CD4-positive, alpha-beta T cell (primary cell): ENCODE measurements at regions of chr10 and their contacts with region 1.

Region 1: GRCh38 chr10:6563075-6563474 is 17.0 kb downstream of the PRKCQ start:
- DNase-seq: peak in 6 of 14 experiments; percentile 13 to 64 (median 50)
- ATAC-seq: peak; percentile 58
- H3K4me3 ChIP-seq: peak overlapping the region; percentile 21
- H3K4me3 Mint-ChIP-seq: peak overlapping the region; percentile 82
- H3K27ac ChIP-seq: peak overlapping the region; percentile 50 to 66
- H3K27ac Mint-ChIP-seq: peak overlapping the region; percentile 81
- H3K4me1 ChIP-seq: peaks cover 71% of the 10 kb centered on the region
- H3K4me1 Mint-ChIP-seq: peaks cover 90% of the 10 kb centered on the region
- H3K27me3 ChIP-seq: no peaks in the 10 kb centered on the region
- H3K27me3 Mint-ChIP-seq: no peaks in the 10 kb centered on the region
- CTCF ChIP-seq: no peak

Region 2: DNA sequence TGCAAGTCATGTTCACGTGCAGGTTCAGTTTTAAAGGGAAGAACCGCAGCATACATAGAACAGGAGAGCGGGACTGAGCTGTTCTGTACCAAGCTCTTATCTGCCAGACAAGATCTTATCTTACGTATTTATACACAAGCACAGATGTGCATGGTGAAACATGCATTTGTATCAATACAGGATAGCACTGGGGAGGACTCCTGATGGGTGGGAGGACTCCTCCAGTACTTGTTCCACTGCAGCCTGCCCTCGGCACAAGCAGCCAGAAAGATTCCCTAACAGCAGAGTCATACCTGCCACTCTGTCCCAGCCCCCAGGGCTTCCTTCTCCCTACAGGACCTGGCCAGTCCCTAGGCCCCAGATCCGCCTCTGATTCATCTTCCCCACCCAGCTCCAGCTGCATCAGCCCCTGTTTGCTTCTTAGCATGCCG is 30.2 kb after region 1 on chr10:
- CTCF ChIA-PET with region 1: no interaction called
- POLR2A ChIA-PET with region 1: interaction called, 10 read pairs
- intact Hi-C with region 1: no loop called
- DNase-seq: peak in 5 of 14 experiments; percentile 16 to 64 (median 50)
- ATAC-seq: peak; percentile 67
- H3K4me3 ChIP-seq: no peak overlapping the region
- H3K4me3 Mint-ChIP-seq: peak overlapping the region; percentile 66
- H3K27ac ChIP-seq: peak overlapping the region; percentile 79 to 83
- H3K27ac Mint-ChIP-seq: peak overlapping the region; percentile 94
- H3K4me1 ChIP-seq: peaks cover 54% of the 10 kb centered on the region
- H3K4me1 Mint-ChIP-seq: peaks cover 97% of the 10 kb centered on the region
- H3K27me3 ChIP-seq: no peaks in the 10 kb centered on the region
- H3K27me3 Mint-ChIP-seq: no peaks in the 10 kb centered on the region
- CTCF ChIP-seq: no peak